ENCODE measurements at regions of chr6 and their contacts with region 1.

Region 1: DNA sequence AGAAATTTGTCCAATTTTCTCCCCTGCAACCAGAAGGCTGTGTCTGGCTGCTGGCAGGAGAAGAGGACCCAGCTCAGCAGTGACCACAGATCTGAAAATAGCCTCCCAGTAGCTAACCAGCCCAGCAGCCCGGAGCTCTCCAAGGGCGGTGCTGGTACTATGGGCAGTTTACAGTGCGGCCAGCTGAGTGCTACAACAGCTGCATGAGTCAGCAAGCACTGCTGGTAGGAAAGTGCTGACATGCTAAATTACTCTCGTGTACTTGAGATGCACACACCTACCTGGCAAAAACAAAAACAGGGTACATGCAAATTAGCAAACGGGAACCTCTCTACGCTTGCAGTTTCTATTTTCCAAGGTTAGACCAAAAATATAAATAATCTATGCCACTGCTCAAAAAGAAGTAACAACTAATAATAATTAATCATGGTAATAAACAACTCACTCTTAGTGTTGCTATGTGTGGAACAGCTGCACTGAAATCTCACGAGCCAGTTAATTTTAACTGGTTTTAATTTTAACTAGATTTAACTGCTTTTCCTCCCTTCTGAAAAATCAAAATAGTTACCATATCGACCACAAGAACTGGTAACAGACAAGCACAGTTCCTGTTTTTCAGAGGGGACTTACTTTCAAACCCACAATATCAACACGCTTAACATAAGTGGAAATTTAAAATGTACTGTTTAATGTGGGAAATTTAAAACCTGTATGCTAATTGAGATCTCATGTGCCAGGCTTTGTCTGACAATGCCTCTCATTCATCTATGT is 10.8 kb downstream of the BACH2 start:
- DNase-seq: peak; percentile 75
- H3K4me3 Mint-ChIP-seq: peak overlapping the region; percentile 67
- H3K27ac Mint-ChIP-seq: peak overlapping the region; percentile 89
- H3K4me1 Mint-ChIP-seq: peaks cover 91% of the 10 kb centered on the region
- H3K27me3 Mint-ChIP-seq: no peaks in the 10 kb centered on the region

Region 2: DNA sequence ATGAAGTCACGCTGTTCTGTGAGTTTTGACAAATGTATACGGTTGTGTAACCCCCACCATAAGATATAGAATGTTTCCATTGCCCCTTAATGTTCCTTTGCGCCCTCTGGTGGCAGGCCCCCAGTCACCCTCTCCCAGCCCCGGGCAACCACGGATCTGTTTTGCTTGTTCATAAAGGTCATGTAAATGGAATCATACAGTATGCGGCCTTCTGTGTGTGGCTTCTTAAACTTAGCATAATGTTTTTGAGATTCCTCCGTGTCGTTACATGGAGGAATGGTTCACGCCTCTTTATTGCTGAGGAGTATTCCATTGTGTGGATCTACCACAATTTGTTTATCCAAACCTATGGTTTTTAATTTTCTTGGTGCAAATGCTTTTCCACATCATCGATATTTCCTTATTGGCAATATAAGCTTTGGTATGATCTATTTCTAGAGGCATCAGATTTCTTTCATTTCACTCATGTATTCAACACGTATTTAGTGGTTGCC is 675.6 kb before region 1 on chr6:
- CTCF ChIA-PET with region 1: no interaction called
- POLR2A ChIA-PET with region 1: no interaction called
- intact Hi-C with region 1: no loop called
- DNase-seq: peak; percentile 83
- H3K4me3 Mint-ChIP-seq: no peak overlapping the region
- H3K27ac Mint-ChIP-seq: no peak overlapping the region
- H3K4me1 Mint-ChIP-seq: no peaks in the 10 kb centered on the region
- H3K27me3 Mint-ChIP-seq: no peaks in the 10 kb centered on the region

Region 3: GRCh38 chr6:89940225-89941027 is 345.4 kb before region 1 on chr6:
- CTCF ChIA-PET with region 1: interaction called, 30 read pairs
- POLR2A ChIA-PET with region 1: interaction called, 3 read pairs
- intact Hi-C with region 1: no loop called
- DNase-seq: peak; percentile 78
- H3K4me3 Mint-ChIP-seq: no peak overlapping the region
- H3K27ac Mint-ChIP-seq: no peak overlapping the region
- H3K4me1 Mint-ChIP-seq: peaks cover 41% of the 10 kb centered on the region
- H3K27me3 Mint-ChIP-seq: no peaks in the 10 kb centered on the region

Region 4: GRCh38 chr6:90251295-90251992 is 34.4 kb before region 1 on chr6:
- CTCF ChIA-PET with region 1: interaction called, 5 read pairs
- POLR2A ChIA-PET with region 1: interaction called, 16 read pairs
- intact Hi-C with region 1: loop called (anchors 1 kb)
- DNase-seq: no peak
- H3K4me3 Mint-ChIP-seq: no peak overlapping the region
- H3K27ac Mint-ChIP-seq: peak overlapping the region; percentile 83
- H3K4me1 Mint-ChIP-seq: peaks cover 80% of the 10 kb centered on the region
- H3K27me3 Mint-ChIP-seq: no peaks in the 10 kb centered on the region

Region 5: GRCh38 chr6:90296346-90297114 is 10.7 kb after region 1 on chr6 and contains the start of gene BACH2:
- CTCF ChIA-PET with region 1: interaction called, 18 read pairs
- POLR2A ChIA-PET with region 1: interaction called, 9 read pairs
- intact Hi-C with region 1: loop called (anchors 1 kb)
- DNase-seq: peak; percentile 97
- H3K4me3 Mint-ChIP-seq: peak within 1 kb of the TSS; percentile 79
- H3K27ac Mint-ChIP-seq: peak within 1 kb of the TSS; percentile 86
- H3K4me1 Mint-ChIP-seq: peaks cover 32% of the 10 kb centered on the region
- H3K27me3 Mint-ChIP-seq: peaks cover 9% of the 10 kb centered on the region
- total RNA-seq, gene BACH2: 49.2 to 55.4 TPM

Region 6: DNA sequence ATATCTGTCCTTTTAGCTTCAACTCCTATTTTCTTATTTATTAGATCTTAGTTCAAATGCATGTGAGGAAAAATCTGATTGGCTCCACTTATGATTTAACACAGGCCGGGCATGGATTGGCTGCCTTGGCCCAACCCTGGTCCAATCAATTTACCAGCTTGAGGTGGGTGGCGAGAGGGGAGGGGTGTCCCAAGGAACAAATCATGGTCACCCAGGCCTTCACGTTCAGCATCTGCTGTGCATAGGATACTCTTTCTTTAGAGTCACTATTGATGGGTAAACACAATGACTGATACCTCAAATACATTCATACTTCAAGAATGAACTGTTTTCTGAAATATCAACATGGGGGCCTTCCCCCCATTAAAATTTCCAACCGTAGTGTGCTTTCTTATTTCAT is 25.8 kb after region 1 on chr6:
- CTCF ChIA-PET with region 1: no interaction called
- POLR2A ChIA-PET with region 1: no interaction called
- intact Hi-C with region 1: no loop called
- DNase-seq: no peak
- H3K4me3 Mint-ChIP-seq: no peak overlapping the region
- H3K27ac Mint-ChIP-seq: no peak overlapping the region
- H3K4me1 Mint-ChIP-seq: no peaks in the 10 kb centered on the region
- H3K27me3 Mint-ChIP-seq: peaks cover 21% of the 10 kb centered on the region

Region 7: GRCh38 chr6:90413867-90414266 is 128.1 kb after region 1 on chr6:
- CTCF ChIA-PET with region 1: interaction called, 6 read pairs
- POLR2A ChIA-PET with region 1: interaction called, 9 read pairs
- intact Hi-C with region 1: loop called (anchors 1 kb)
- DNase-seq: peak; percentile 92
- H3K4me3 Mint-ChIP-seq: peak overlapping the region; percentile 64
- H3K27ac Mint-ChIP-seq: peak overlapping the region; percentile 93
- H3K4me1 Mint-ChIP-seq: peaks cover 71% of the 10 kb centered on the region
- H3K27me3 Mint-ChIP-seq: no peaks in the 10 kb centered on the region

Region 8: DNA sequence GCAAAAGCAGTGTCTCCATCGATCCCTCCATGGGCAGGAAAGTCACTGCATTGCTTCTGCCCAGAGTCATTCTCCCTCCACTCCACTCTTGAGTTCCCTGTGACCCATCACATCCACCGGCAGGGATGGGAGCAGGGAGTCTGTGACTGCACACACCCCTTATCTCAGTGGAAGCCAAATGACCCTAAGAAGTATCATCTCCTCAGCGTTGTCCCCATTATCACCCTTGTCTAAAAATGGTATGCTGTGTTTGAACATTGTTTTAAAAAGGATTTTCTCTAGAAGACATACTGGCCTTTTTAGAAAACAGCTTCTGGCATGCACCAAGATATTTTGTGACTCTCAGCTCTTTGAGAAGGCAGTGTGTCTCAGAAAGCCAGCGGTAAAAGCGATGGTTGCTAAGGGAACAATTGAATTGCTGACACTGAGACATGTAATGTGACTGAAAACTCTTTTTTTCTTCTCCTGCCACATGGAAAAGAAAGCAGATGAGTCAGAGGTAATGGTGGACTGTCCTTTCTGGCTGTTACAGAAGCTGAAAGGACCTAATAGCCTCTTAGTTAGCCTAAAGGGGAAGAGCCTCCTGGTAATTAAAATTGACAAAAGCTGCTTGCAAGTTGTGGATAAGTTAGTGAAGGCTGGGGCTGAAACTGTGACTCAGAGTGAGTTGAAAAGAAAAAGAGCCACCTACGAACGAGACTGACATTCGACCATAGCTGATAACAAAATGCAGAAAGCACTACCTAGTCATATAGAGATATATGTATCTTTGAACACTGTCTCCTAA is 180.6 kb after region 1 on chr6:
- CTCF ChIA-PET with region 1: no interaction called
- POLR2A ChIA-PET with region 1: interaction called, 16 read pairs
- intact Hi-C with region 1: loop called (anchors 2 kb)
- DNase-seq: peak; percentile 60
- H3K4me3 Mint-ChIP-seq: peak overlapping the region; percentile 27
- H3K27ac Mint-ChIP-seq: peak overlapping the region; percentile 96
- H3K4me1 Mint-ChIP-seq: peaks cover 84% of the 10 kb centered on the region
- H3K27me3 Mint-ChIP-seq: peaks cover 1% of the 10 kb centered on the region

Region 9: GRCh38 chr6:90586836-90587638 is 301.2 kb after region 1 on chr6 and contains the start of gene MAP3K7:
- CTCF ChIA-PET with region 1: no interaction called
- POLR2A ChIA-PET with region 1: no interaction called
- intact Hi-C with region 1: loop called (anchors 1 kb)
- DNase-seq: peak; percentile 97
- H3K4me3 Mint-ChIP-seq: peak within 1 kb of the TSS; percentile 98
- H3K27ac Mint-ChIP-seq: peak within 1 kb of the TSS; percentile 99
- H3K4me1 Mint-ChIP-seq: peaks cover 38% of the 10 kb centered on the region
- H3K27me3 Mint-ChIP-seq: peaks cover 6% of the 10 kb centered on the region
- total RNA-seq, gene MAP3K7: 26.3 to 28.7 TPM

Measured in activated CD4-positive, alpha-beta memory T cell treated with anti-CD3 and anti-CD28 coated beads for 36 hours (primary cell).